Heart right ventricle (tissue), 16 donors: ENCODE measurements at regions of chr4 and their contacts with region 1.

Region 1: GRCh38 chr4:159446266-159446976 is 343.5 kb downstream of the RAPGEF2 start:
- DNase-seq: peak; percentile 16 to 59
- ATAC-seq: peak; percentile 96 to 99 (median 97)
- H3K4me3 ChIP-seq: no peak overlapping the region
- H3K27ac ChIP-seq: peak overlapping the region in 4 of 10 donors; percentile 1 to 36 (median 31)
- H3K4me1 ChIP-seq: peaks cover 2 to 18% (median 10%) of the 10 kb centered on the region in 9 donors
- H3K27me3 ChIP-seq: no peaks in the 10 kb centered on the region
- CTCF ChIP-seq: peak; percentile 79 to 96 (median 90)

Region 2: GRCh38 chr4:158729716-158730559 is 716.5 kb before region 1 on chr4:
- intact Hi-C with region 1: loop called in 8 of 10 experiments (anchors 5 to 10 kb)
- DNase-seq: peak; percentile 41 to 69
- ATAC-seq: peak; percentile 89 to 97 (median 96)
- H3K4me3 ChIP-seq: no peak overlapping the region
- H3K27ac ChIP-seq: no peak overlapping the region
- H3K4me1 ChIP-seq: peaks cover 0 to 8% (median 0%) of the 10 kb centered on the region in 9 donors
- H3K27me3 ChIP-seq: no peaks in the 10 kb centered on the region
- CTCF ChIP-seq: peak; percentile 84 to 99 (median 87)

Region 3: DNA sequence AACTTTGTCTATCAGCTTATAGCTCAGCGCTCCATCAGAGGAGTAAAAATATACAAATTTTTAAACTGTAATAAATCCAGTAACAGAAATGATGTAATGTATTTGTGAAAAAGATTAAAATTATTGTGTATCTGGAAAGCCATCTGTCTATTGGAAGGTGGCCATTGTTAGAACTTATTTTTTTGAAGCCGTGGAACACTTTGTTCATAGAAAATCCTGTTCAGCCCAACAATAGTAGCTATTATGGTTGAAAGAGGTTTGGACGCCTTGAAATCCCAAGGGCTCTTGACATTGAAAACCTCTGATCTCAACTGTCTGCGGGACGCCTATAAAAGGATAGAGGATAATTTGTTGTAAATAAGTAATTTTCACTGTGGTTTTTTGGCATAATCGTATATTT is 245.3 kb before region 1 on chr4:
- intact Hi-C with region 1: loop called in 6 of 10 experiments (anchors 5 to 10 kb)
- DNase-seq: no peak
- ATAC-seq: peak in 5 of 8 donors; percentile 32 to 77 (median 46)
- H3K4me3 ChIP-seq: peak overlapping the region in 1 of 10 donors; percentile 19
- H3K27ac ChIP-seq: peak overlapping the region; percentile 20 to 85 (median 66)
- H3K4me1 ChIP-seq: peaks cover 10 to 88% (median 61%) of the 10 kb centered on the region in 9 donors
- H3K27me3 ChIP-seq: no peaks in the 10 kb centered on the region
- CTCF ChIP-seq: no peak

Region 4: GRCh38 chr4:159273141-159273438 is 173.3 kb before region 1 on chr4:
- intact Hi-C with region 1: loop called in 1 of 10 experiments (anchors 10 kb)
- DNase-seq: peak in 1 of 2 donors; percentile 68
- ATAC-seq: peak; percentile 45 to 71 (median 64)
- H3K4me3 ChIP-seq: no peak overlapping the region
- H3K27ac ChIP-seq: peak overlapping the region in 8 of 10 donors; percentile 2 to 75 (median 43)
- H3K4me1 ChIP-seq: peaks cover 5 to 88% (median 67%) of the 10 kb centered on the region in 9 donors
- H3K27me3 ChIP-seq: no peaks in the 10 kb centered on the region
- CTCF ChIP-seq: no peak

Region 5: GRCh38 chr4:159358226-159358625 is 88.2 kb before region 1 on chr4:
- intact Hi-C with region 1: loop called in 4 of 10 experiments (anchors 5 to 10 kb)
- DNase-seq: no peak
- ATAC-seq: peak in 2 of 8 donors; percentile 19 to 21
- H3K4me3 ChIP-seq: no peak overlapping the region
- H3K27ac ChIP-seq: peak overlapping the region in 7 of 10 donors; percentile 2 to 55 (median 15)
- H3K4me1 ChIP-seq: peaks cover 0 to 36% (median 5%) of the 10 kb centered on the region in 9 donors
- H3K27me3 ChIP-seq: no peaks in the 10 kb centered on the region
- CTCF ChIP-seq: no peak

Region 6: DNA sequence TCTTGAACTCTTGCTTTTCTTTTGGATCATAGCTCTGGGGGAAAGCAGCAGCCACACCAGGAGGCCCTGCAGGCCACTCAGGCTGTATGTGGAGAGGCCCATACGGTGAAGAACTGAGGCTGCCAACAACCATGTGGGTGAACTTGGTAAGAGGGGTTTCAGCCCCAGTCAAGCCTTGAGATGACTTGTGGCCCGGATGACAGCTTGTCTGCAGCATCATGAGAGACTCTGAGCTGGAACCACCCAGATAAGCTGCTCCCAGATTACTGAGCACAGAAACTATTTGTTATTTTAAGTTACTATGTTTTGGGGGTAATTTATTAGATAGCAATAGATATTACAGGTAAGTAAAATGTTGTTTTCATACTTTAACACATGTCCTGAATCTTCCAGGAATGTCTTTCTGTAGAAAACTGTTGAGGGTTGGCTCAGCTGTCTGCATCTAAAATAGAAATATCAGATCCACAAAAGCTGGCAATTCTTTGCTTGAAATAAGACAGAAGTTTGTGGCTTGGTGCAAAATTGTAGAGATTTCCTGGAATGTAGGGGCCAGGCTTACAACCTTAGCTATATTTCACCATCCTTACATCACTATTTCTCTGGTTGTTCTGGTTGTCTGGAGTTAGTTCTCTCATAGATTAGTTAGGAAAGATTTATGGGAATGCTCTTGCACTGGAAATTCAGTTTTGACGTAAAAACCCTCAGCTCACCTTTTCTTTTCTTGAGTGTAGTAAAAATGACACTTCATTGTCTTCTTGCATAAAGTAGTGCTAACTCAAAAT is 71.5 kb before region 1 on chr4:
- intact Hi-C with region 1: no loop called
- DNase-seq: no peak
- ATAC-seq: no peak
- H3K4me3 ChIP-seq: no peak overlapping the region
- H3K27ac ChIP-seq: no peak overlapping the region
- H3K4me1 ChIP-seq: peaks cover 0 to 7% (median 0%) of the 10 kb centered on the region in 9 donors
- H3K27me3 ChIP-seq: no peaks in the 10 kb centered on the region
- CTCF ChIP-seq: no peak

Region 7: DNA sequence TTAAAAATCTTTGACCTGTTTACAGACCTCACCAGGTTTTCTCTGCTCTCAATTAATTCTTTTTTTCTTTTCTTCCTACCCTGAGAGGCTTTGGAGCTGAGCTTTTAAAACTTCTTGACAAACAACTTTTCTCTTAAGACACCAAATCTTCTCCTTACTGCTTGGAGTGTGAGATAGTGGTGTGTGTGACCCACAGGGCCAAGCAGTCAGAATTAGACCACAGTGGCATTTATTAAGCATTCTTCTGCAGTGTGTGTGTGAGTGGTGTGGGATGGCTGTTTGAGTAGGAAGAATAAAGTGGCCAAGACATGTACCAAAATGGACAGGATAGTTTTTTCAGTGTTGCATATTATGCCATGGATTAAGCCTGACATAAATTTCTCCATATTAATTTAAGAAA is 321.6 kb after region 1 on chr4:
- intact Hi-C with region 1: no loop called
- DNase-seq: no peak
- ATAC-seq: no peak
- H3K4me3 ChIP-seq: no peak overlapping the region
- H3K27ac ChIP-seq: no peak overlapping the region
- H3K4me1 ChIP-seq: no peaks in the 10 kb centered on the region
- H3K27me3 ChIP-seq: no peaks in the 10 kb centered on the region
- CTCF ChIP-seq: no peak